Posterior cingulate gyrus (tissue), 11 donors: ENCODE measurements at regions of chr15 and their contacts with region 1.

Region 1: DNA sequence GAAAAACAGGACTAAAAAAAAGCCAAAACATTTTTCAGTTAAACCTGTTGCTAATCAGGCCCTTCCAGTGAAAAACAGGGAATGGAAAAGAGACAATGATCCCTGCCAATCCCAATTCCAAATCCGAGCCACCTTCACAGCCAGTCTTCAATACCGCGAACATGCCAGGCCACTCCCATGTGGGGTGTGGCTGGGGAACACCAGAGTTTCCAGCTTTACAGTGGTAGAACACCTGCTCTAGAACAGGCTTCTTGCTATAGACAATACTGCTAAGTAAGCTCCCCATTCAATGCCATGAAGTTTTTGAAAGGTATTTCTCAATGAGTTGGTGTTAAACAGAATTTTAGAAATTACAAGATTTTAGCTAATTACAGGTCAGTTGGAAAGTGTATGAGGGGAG is 228.3 kb downstream of the ATP8B4 start:
- DNase-seq: no peak

Region 2: DNA sequence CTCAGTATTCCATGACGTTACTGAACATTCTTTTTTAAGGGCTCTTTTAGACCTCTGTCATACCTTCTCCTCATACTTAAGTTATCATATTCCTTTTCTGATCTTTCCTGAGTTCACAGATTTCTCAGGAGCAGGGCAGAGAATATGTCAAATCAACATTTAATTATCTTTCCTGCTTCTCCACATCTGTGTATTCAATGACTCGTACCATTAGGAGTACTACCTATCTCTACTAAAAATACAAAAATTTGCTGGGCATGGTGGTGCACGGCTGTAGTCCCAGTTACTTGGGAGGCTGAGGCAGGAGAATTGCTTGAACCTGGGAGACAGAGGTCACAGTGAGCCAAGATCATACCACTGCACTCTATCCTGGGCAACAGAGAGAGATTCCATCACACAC is 116.0 kb before region 1 on chr15:
- intact Hi-C with region 1: no loop called
- DNase-seq: no peak

Region 3: DNA sequence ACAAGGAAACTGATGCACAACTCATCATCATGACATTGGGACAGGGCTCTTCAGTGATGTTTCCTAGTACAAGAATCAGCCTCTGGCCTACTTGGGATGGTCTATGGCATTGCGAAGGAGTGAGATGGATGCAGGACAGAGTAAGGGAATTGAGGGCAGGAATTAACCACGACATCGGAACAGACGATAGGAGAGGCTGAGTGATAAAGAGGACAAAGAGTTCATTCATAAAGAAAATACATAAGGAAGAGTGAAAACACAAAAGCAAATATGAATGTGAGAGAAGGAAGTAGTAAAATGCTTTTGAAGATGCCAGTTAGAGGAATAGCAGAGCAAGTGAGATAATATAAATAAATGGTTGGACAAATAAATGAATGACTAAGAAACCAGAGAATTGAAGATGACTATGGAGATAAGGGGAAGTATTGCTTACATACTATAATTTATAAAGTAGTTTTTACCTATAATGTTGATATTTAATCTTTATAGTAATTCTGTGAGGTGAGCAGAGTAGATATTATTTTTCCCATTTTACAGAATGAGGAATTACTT is 66.6 kb before region 1 on chr15:
- intact Hi-C with region 1: loop called (anchors 5 kb)
- DNase-seq: no peak